ENCODE measurements at regions of chr7 and their contacts with region 1.

Region 1: DNA sequence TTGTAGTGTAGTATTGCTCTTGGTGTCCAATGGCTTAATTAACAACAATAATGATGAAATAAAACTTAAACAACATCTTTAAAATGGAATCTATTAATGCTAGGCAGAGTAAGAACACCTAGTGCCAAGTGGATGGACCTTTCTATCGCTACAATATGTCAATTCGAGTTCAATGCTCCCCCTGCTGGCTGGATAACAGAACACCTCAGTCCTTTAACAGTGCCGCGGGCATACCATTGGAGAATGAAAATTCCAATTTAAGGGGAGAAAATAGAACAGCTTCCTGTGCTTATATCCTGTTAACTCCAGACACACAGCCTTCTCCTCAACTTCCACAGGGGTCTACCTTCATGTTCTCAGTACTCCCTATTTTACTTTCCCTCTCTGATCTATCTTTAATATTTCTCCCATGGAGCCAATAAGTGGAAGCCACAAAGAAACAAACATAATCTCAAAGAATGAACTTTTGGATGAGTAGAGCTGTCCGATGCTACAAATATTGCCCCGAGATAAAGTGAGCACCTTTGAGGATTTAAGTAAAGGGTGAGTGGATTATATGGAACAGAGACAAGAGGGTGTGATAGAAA is 41.4 kb downstream of the COL1A2 start:
- DNase-seq: peak; percentile 61
- H3K27ac ChIP-seq: no peak overlapping the region
- CTCF ChIP-seq: peak; percentile 86

Region 2: DNA sequence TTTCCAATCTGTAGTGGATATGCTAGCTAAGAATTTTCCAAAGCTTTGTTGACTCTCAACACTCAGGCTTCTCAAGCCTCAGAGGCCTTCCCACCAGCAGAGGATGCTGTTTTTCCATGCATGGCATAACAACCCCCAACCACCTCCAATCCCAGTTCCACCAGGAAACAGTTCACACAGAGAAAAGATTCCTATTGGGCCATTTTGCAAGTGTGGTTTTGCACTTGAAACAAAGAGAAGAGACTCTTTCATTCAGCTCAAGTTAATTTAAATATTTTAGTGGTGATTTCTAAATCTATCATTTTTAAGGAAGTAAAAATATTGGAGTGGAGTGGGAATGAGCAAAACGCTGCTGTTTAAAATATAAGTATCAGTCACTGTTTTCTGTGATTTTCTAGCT is 147.0 kb before region 1 on chr7:
- CTCF ChIA-PET with region 1: interaction called, 15 read pairs
- POLR2A ChIA-PET with region 1: no interaction called
- DNase-seq: peak; percentile 75
- H3K27ac ChIP-seq: no peak overlapping the region
- CTCF ChIP-seq: peak; percentile 94

Measured in RWPE1 (cell line).